Spleen (tissue), 13 donors: ENCODE measurements at regions of chr9 and their contacts with region 1.

Region 1: GRCh38 chr9:91422758-91423711 is 597 bp downstream of the NFIL3 start:
- DNase-seq: peak; percentile 90
- H3K4me3 ChIP-seq: peak overlapping the region; percentile 54 to 74 (median 62)
- H3K27ac ChIP-seq: peak overlapping the region; percentile 55 to 96 (median 92)
- H3K4me1 ChIP-seq: peaks cover 10 to 87% (median 52%) of the 10 kb centered on the region in 6 donors
- H3K27me3 ChIP-seq: peaks cover 0 to 56% (median 13%) of the 10 kb centered on the region in 7 donors
- CTCF ChIP-seq: peak in 9 of 11 experiments; percentile 5 to 50 (median 23)
- POLR2A ChIP-seq: no peak

Region 2: GRCh38 chr9:90914868-90915483 is 508.1 kb before region 1 on chr9:
- intact Hi-C with region 1: loop called (anchors 2 kb)
- DNase-seq: peak; percentile 93
- H3K4me3 ChIP-seq: no peak overlapping the region
- H3K27ac ChIP-seq: no peak overlapping the region
- H3K4me1 ChIP-seq: peaks cover 0 to 9% (median 0%) of the 10 kb centered on the region in 6 donors
- H3K27me3 ChIP-seq: peaks cover 0 to 9% (median 0%) of the 10 kb centered on the region in 7 donors
- CTCF ChIP-seq: peak; percentile 88 to 97 (median 95)
- POLR2A ChIP-seq: no peak

Region 3: DNA sequence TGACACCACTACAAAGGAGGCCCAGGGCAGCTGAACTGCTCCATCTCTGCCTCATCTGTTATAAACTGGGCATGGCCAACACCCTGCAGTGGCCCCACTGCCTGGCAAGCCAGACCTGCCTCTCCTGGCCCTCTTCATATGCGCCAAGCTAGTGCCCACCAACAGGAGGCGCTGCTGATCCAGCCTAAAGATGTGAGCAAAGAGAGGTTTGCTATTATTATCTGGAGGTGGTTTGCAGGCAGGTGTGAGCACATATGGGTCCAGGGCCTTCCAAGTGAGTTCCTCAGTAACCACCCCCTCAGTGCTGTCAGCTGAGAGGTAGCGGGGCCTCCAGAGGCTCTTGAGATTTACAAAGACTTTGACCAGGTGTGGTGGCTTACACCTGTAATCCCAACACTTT is 389.2 kb before region 1 on chr9:
- intact Hi-C with region 1: loop called (anchors 5 kb)
- DNase-seq: peak; percentile 86
- H3K4me3 ChIP-seq: no peak overlapping the region
- H3K27ac ChIP-seq: peak overlapping the region in 2 of 8 donors; percentile 40 to 68
- H3K4me1 ChIP-seq: peaks cover 12 to 28% (median 20%) of the 10 kb centered on the region in 6 donors
- H3K27me3 ChIP-seq: peaks cover 0 to 28% (median 0%) of the 10 kb centered on the region in 7 donors
- CTCF ChIP-seq: peak in 9 of 11 experiments; percentile 14 to 69 (median 55)
- POLR2A ChIP-seq: no peak

Region 4: GRCh38 chr9:91193658-91194391 is 229.2 kb before region 1 on chr9:
- intact Hi-C with region 1: loop called (anchors 10 kb)
- DNase-seq: peak; percentile 95
- H3K4me3 ChIP-seq: peak overlapping the region; percentile 20 to 70 (median 40)
- H3K27ac ChIP-seq: peak overlapping the region; percentile 89 to 95 (median 92)
- H3K4me1 ChIP-seq: peaks cover 11 to 73% (median 49%) of the 10 kb centered on the region in 6 donors
- H3K27me3 ChIP-seq: no peaks in the 10 kb centered on the region
- CTCF ChIP-seq: peak in 2 of 11 experiments; percentile 7 to 22
- POLR2A ChIP-seq: peak in 2 of 3 donors; percentile 5 to 40

Region 5: DNA sequence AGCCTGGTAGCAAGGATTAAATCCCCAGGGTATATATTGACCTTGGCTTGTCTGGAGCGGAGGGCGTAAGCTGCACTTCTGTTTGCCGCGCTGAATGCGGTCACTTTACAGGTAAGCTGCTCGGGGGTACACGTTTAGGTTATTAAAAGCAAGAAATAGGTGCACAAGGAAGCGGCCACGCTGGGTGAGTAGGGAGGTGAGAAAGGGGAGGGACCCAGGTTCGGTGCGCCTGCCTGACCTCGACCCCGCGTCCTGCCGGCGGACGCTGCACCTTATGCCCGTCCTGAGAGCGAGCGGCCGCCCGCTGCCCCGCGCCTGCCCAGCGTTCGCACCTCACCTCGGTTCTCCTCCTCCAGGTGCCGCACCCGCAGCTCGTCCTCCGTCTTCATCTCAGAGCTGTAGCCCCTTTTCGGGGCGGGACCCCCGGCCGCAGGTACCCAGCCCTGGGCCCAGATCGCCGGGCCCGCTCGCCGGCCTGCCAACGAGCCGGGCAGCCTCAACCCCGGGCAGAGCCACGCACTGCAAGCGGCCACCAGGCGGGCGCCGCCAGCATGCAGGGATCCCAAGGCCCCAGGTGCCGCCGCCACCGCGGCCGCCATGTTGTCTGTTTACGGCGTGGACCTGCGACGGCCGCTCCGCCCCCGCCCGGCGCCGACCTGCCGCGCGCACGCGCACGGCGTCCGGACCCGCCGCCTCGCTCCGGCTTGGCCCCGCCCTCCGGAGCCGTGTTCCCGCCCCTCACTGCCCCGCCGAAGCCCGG is 61.6 kb before region 1 on chr9 and contains the start of gene AUH:
- intact Hi-C with region 1: loop called (anchors 10 kb)
- DNase-seq: peak; percentile 97
- H3K4me3 ChIP-seq: peak within 1 kb of the TSS; percentile 95 to 100 (median 98)
- H3K27ac ChIP-seq: peak within 1 kb of the TSS; percentile 81 to 96 (median 94)
- H3K4me1 ChIP-seq: peaks cover 17 to 49% (median 42%) of the 10 kb centered on the region in 6 donors
- H3K27me3 ChIP-seq: no peaks in the 10 kb centered on the region
- CTCF ChIP-seq: peak in 6 of 11 experiments; percentile 14 to 37 (median 20)
- POLR2A ChIP-seq: peak in 1 of 3 donors; percentile 58
- total RNA-seq, gene AUH: 16.3 to 37.3 (median 24.1) TPM

Region 6: GRCh38 chr9:91374939-91375338 is 48.1 kb before region 1 on chr9:
- intact Hi-C with region 1: no loop called
- DNase-seq: no peak
- H3K4me3 ChIP-seq: no peak overlapping the region
- H3K27ac ChIP-seq: no peak overlapping the region
- H3K4me1 ChIP-seq: peaks cover 0 to 21% (median 6%) of the 10 kb centered on the region in 6 donors
- H3K27me3 ChIP-seq: no peaks in the 10 kb centered on the region
- CTCF ChIP-seq: no peak
- POLR2A ChIP-seq: no peak